B cell (primary cell): ENCODE measurements at regions of chr2 and their contacts with region 1.

Region 1: DNA sequence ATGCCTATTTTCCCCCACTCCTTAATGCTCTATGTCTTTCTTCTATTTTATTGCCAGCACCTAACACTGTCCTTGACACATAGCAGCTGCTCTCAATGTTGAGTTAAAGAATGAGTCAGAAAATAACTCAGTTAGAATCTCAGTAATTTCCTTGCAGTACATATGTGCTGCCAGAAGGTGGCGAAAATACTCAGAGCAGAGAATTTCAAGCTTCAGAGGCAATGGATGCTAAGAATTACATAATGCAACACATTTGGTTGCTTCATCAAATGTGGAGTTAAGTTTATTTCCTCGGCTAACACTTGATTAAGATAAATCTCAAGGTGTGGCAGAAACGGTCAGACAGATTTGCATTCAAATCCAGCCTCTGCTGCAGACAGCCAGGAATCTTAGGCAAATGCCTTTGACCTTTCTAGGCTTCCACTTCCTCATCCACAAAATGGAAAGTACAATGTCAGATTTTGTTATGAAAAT is 105.6 kb downstream of the VSNL1 start:
- DNase-seq: peak; percentile 62
- ATAC-seq: peak; percentile 56
- H3K4me3 ChIP-seq: no peak overlapping the region
- H3K4me3 Mint-ChIP-seq: no peak overlapping the region
- H3K27ac ChIP-seq: no peak overlapping the region
- H3K27ac Mint-ChIP-seq: no peak overlapping the region
- H3K4me1 ChIP-seq: peaks cover 0 to 3% of the 10 kb centered on the region in 2 donors
- H3K4me1 Mint-ChIP-seq: peaks cover 9% of the 10 kb centered on the region
- H3K27me3 ChIP-seq: no peaks in the 10 kb centered on the region
- H3K27me3 Mint-ChIP-seq: no peaks in the 10 kb centered on the region
- CTCF ChIP-seq: peak; percentile 80

Region 2: GRCh38 chr2:17658251-17658843 is 12.2 kb after region 1 on chr2:
- CTCF ChIA-PET with region 1: interaction called, 10 read pairs
- POLR2A ChIA-PET with region 1: no interaction called
- intact Hi-C with region 1: no loop called
- DNase-seq: no peak
- ATAC-seq: no peak
- H3K4me3 ChIP-seq: no peak overlapping the region
- H3K4me3 Mint-ChIP-seq: no peak overlapping the region
- H3K27ac ChIP-seq: no peak overlapping the region
- H3K27ac Mint-ChIP-seq: no peak overlapping the region
- H3K4me1 ChIP-seq: no peaks in the 10 kb centered on the region
- H3K4me1 Mint-ChIP-seq: no peaks in the 10 kb centered on the region
- H3K27me3 ChIP-seq: no peaks in the 10 kb centered on the region
- H3K27me3 Mint-ChIP-seq: no peaks in the 10 kb centered on the region
- CTCF ChIP-seq: no peak